Ovary (tissue), 10 donors: ENCODE measurements at regions of chr11 and their contacts with region 1.

Region 1: GRCh38 chr11:118907051-118908042 is 18.4 kb downstream of the BCL9L start:
- DNase-seq: peak; percentile 73 to 88 (median 87)
- H3K4me3 ChIP-seq: no peak overlapping the region
- H3K27ac ChIP-seq: peak overlapping the region; percentile 33 to 64
- H3K4me1 ChIP-seq: peaks cover 16% of the 10 kb centered on the region
- H3K27me3 ChIP-seq: no peaks in the 10 kb centered on the region
- CTCF ChIP-seq: peak; percentile 85 to 96 (median 94)
- EP300 ChIP-seq: no peak
- POLR2A ChIP-seq: peak; percentile 44

Region 2: GRCh38 chr11:118928108-118928870 is 20.9 kb after region 1 on chr11:
- intact Hi-C with region 1: loop called in 3 of 4 experiments (anchors 1 to 2 kb)
- DNase-seq: peak; percentile 92 to 95 (median 95)
- H3K4me3 ChIP-seq: peak overlapping the region; percentile 98
- H3K27ac ChIP-seq: peak overlapping the region; percentile 76 to 90
- H3K4me1 ChIP-seq: peaks cover 3% of the 10 kb centered on the region
- H3K27me3 ChIP-seq: no peaks in the 10 kb centered on the region
- CTCF ChIP-seq: peak; percentile 88 to 98 (median 98)
- EP300 ChIP-seq: no peak
- POLR2A ChIP-seq: peak; percentile 35

Region 3: DNA sequence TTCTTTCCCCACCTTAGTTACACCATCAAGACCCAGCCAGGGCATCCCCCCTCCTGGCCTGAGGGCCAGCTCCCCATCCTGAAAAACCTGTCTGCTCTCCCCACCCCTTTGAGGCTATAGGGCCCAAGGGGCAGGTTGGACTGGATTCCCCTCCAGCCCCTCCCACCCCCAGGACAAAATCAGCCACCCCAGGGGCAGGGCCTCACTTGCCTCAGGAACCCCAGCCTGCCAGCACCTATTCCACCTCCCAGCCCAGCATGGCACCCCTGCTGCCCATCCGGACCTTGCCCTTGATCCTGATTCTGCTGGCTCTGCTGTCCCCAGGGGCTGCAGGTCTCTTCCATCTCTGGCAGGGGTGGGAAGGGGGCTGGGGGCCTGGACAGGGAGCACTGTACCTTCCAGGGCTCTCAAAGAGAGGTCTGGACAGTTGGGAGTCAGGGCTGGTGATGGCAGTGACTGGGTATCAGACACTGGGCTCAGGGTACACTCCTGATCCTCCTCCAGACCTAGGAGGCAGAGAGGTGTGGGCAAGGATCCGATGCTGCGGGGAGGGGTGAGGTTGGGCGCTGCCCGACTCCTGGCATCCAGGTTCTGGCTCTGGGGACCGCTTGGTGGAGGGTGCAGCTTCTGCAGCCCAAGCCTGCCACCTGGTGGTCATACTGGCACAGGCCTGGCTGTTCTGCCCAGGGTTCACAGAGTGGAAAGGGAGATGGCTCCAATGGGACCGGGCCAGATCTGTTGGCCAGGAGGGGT is 48.9 kb after region 1 on chr11 and contains the start of gene UPK2:
- intact Hi-C with region 1: loop called in 1 of 4 experiments (anchors 5 kb)
- DNase-seq: peak; percentile 84 to 91 (median 89)
- H3K4me3 ChIP-seq: no peak within 1 kb of the TSS
- H3K27ac ChIP-seq: no peak within 1 kb of the TSS
- H3K4me1 ChIP-seq: no peaks in the 10 kb centered on the region
- H3K27me3 ChIP-seq: no peaks in the 10 kb centered on the region
- CTCF ChIP-seq: peak; percentile 95 to 97 (median 95)
- EP300 ChIP-seq: no peak
- POLR2A ChIP-seq: no peak
- total RNA-seq, gene UPK2: not detected